Activated CD8-positive, alpha-beta T cell treated with anti-CD3 and anti-CD28 coated beads, Interleukin-2, amount 10 ng/mL, durations not matched to agents 7 days and 5 days (primary cell): ENCODE measurements at regions of chr7 and their contacts with region 1.

Region 1: GRCh38 chr7:12686894-12687717 is at the start of gene ARL4A:
- DNase-seq: peak; percentile 95
- ATAC-seq: peak; percentile 74
- H3K4me3 Mint-ChIP-seq: peak within 1 kb of the TSS; percentile 97
- H3K27ac Mint-ChIP-seq: peak within 1 kb of the TSS; percentile 97
- H3K4me1 Mint-ChIP-seq: peaks cover 37% of the 10 kb centered on the region
- H3K27me3 Mint-ChIP-seq: no peaks in the 10 kb centered on the region
- total RNA-seq, gene ARL4A: 15.8 to 16.2 TPM

Region 2: GRCh38 chr7:12638851-12639467 is 48.1 kb before region 1 on chr7:
- CTCF ChIA-PET with region 1: interaction called, 11 read pairs
- POLR2A ChIA-PET with region 1: no interaction called
- DNase-seq: no peak
- ATAC-seq: no peak
- H3K4me3 Mint-ChIP-seq: no peak overlapping the region
- H3K27ac Mint-ChIP-seq: no peak overlapping the region
- H3K4me1 Mint-ChIP-seq: peaks cover 4% of the 10 kb centered on the region
- H3K27me3 Mint-ChIP-seq: peaks cover 4% of the 10 kb centered on the region

Region 3: GRCh38 chr7:12674849-12675248 is 12.3 kb before region 1 on chr7:
- CTCF ChIA-PET with region 1: interaction called, 16 read pairs
- POLR2A ChIA-PET with region 1: no interaction called
- DNase-seq: peak; percentile 68
- ATAC-seq: peak; percentile 81
- H3K4me3 Mint-ChIP-seq: no peak overlapping the region
- H3K27ac Mint-ChIP-seq: no peak overlapping the region
- H3K4me1 Mint-ChIP-seq: no peaks in the 10 kb centered on the region
- H3K27me3 Mint-ChIP-seq: peaks cover 3% of the 10 kb centered on the region

Region 4: GRCh38 chr7:12715372-12716133 is 28.4 kb after region 1 on chr7:
- CTCF ChIA-PET with region 1: interaction called, 25 read pairs
- POLR2A ChIA-PET with region 1: interaction called, 12 read pairs
- DNase-seq: peak; percentile 64
- ATAC-seq: peak; percentile 92
- H3K4me3 Mint-ChIP-seq: peak overlapping the region; percentile 42
- H3K27ac Mint-ChIP-seq: peak overlapping the region; percentile 81
- H3K4me1 Mint-ChIP-seq: peaks cover 34% of the 10 kb centered on the region
- H3K27me3 Mint-ChIP-seq: no peaks in the 10 kb centered on the region

Region 5: GRCh38 chr7:12729112-12729511 is 42.0 kb after region 1 on chr7:
- CTCF ChIA-PET with region 1: interaction called, 50 read pairs
- POLR2A ChIA-PET with region 1: no interaction called
- DNase-seq: no peak
- ATAC-seq: no peak
- H3K4me3 Mint-ChIP-seq: no peak overlapping the region
- H3K27ac Mint-ChIP-seq: no peak overlapping the region
- H3K4me1 Mint-ChIP-seq: peaks cover 24% of the 10 kb centered on the region
- H3K27me3 Mint-ChIP-seq: no peaks in the 10 kb centered on the region

Region 6: GRCh38 chr7:12827920-12828319 is 140.8 kb after region 1 on chr7:
- CTCF ChIA-PET with region 1: no interaction called
- POLR2A ChIA-PET with region 1: no interaction called
- DNase-seq: no peak
- ATAC-seq: no peak
- H3K4me3 Mint-ChIP-seq: no peak overlapping the region
- H3K27ac Mint-ChIP-seq: no peak overlapping the region
- H3K4me1 Mint-ChIP-seq: no peaks in the 10 kb centered on the region
- H3K27me3 Mint-ChIP-seq: no peaks in the 10 kb centered on the region